HEK293 (cell line): ENCODE measurements at regions of chr6 and their contacts with region 1.

Region 1: GRCh38 chr6:32432050-32432450 is 7.6 kb upstream of the HLA-DRA start:
- H3K4me3 ChIP-seq: no peak overlapping the region
- H3K27ac ChIP-seq: no peak overlapping the region
- H3K4me1 ChIP-seq: no peaks in the 10 kb centered on the region
- CTCF ChIP-seq: no peak

Region 2: DNA sequence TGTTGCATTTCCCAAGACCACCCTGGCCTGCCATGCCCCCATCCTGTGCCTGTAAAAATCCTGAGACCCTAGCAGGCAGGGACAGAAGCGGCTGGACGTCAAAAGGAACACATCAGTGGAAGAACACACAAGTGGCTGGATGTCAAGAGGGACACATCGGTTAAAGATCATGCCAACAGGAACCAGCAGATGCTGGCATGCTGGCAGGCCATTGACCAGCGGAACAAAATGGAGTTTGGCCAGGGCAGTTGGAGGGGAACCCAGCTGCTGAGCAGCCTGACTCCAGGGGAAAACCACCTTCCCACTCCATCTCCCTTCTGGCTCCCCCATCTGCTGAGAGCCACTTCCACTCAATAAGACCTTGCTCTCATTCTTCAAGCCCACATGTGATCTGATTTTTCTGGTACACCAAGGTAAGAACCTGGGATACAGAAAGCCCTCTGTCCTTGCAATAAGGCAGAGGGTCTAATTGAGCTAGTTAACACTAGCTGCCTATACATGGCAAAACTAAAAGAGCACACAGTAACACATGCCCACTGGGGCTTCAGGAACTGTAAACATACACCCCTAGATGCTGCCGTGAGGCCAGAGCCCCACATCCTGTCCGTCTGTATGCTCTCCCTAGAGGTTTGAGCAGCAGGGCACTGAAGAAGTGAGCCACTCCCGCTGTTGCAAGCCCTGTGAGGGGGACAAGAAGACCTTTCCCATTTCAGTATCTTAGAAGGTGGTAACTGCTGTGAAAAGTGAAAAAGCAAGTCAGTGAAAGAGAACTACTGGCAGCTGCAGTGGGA is 56.1 kb before region 1 on chr6:
- CTCF ChIA-PET with region 1: no interaction called
- POLR2A ChIA-PET with region 1: no interaction called
- H3K4me3 ChIP-seq: no peak overlapping the region
- H3K27ac ChIP-seq: no peak overlapping the region
- H3K4me1 ChIP-seq: no peaks in the 10 kb centered on the region
- CTCF ChIP-seq: no peak

Region 3: GRCh38 chr6:32614366-32615081 is 182.5 kb after region 1 on chr6:
- CTCF ChIA-PET with region 1: interaction called, 10 read pairs
- POLR2A ChIA-PET with region 1: no interaction called
- H3K4me3 ChIP-seq: no peak overlapping the region
- H3K27ac ChIP-seq: no peak overlapping the region
- H3K4me1 ChIP-seq: no peaks in the 10 kb centered on the region
- CTCF ChIP-seq: no peak

Region 4: GRCh38 chr6:32622545-32623401 is 190.7 kb after region 1 on chr6:
- CTCF ChIA-PET with region 1: interaction called, 12 read pairs
- POLR2A ChIA-PET with region 1: no interaction called
- H3K4me3 ChIP-seq: no peak overlapping the region
- H3K27ac ChIP-seq: no peak overlapping the region
- H3K4me1 ChIP-seq: peaks cover 18% of the 10 kb centered on the region
- CTCF ChIP-seq: no peak

Region 5: GRCh38 chr6:32627831-32628230 is 195.8 kb after region 1 on chr6:
- CTCF ChIA-PET with region 1: interaction called, 12 read pairs
- POLR2A ChIA-PET with region 1: no interaction called
- H3K4me3 ChIP-seq: no peak overlapping the region
- H3K27ac ChIP-seq: no peak overlapping the region
- H3K4me1 ChIP-seq: peaks cover 18% of the 10 kb centered on the region
- CTCF ChIP-seq: no peak